ENCODE measurements at regions of chr19 and their contacts with region 1.

Region 1: GRCh38 chr19:10797541-10798256 is 38.3 kb downstream of the TMED1 start:
- DNase-seq: peak; percentile 95
- ATAC-seq: peak; percentile 94
- H3K4me3 Mint-ChIP-seq: peak overlapping the region; percentile 68
- H3K27ac Mint-ChIP-seq: peak overlapping the region; percentile 97
- H3K4me1 Mint-ChIP-seq: peaks cover 36% of the 10 kb centered on the region
- H3K27me3 Mint-ChIP-seq: no peaks in the 10 kb centered on the region

Region 2: GRCh38 chr19:10808937-10809652 is 11.4 kb after region 1 on chr19:
- CTCF ChIA-PET with region 1: interaction called, 6 read pairs
- POLR2A ChIA-PET with region 1: interaction called, 3 read pairs
- intact Hi-C with region 1: loop called in 1 of 2 experiments (anchors 1 kb)
- DNase-seq: peak; percentile 64
- ATAC-seq: peak; percentile 73
- H3K4me3 Mint-ChIP-seq: no peak overlapping the region
- H3K27ac Mint-ChIP-seq: peak overlapping the region; percentile 74
- H3K4me1 Mint-ChIP-seq: peaks cover 29% of the 10 kb centered on the region
- H3K27me3 Mint-ChIP-seq: no peaks in the 10 kb centered on the region

Region 3: DNA sequence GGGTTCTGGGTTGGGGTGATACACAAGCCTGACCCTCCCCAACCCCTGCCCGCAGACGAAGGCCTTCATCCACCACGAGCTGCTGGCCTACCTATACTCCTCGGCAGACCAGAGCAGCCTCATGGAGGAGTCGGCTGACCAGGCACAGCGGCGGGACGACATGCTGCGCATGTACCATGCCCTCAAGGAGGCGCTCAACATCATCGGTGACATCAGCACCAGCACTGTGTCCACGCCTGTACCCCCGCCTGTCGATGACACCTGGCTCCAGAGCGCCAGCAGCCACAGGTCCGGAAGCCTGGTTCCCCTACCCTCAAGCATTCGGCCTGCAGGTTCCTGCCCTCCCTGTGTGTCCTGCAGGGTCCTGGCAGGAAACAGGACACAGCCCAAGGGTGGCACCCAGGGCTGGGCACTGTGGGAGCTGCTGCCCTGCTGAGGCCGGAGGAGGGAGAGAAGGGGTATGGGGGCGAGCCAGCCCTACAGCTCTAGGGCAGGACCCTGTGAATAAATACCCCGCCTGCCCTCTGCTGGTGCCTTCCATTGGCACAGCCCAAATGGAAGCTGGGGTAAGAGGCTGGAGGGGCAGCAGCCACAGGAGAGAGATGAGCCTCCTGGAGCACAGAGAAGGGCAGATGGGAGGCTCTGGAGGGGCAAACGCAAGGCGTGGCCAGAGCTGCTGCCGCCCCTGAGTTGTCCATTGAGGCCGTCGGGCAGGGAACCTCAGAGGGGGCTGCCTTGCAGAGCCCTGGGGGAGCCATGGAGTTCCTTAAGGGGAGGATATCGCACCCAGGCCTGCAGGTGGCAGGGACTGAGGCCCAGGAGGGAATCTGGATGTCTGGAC is 31.5 kb after region 1 on chr19:
- CTCF ChIA-PET with region 1: no interaction called
- POLR2A ChIA-PET with region 1: no interaction called
- intact Hi-C with region 1: loop called in 1 of 2 experiments (anchors 2 kb)
- DNase-seq: peak; percentile 37
- ATAC-seq: peak; percentile 49
- H3K4me3 Mint-ChIP-seq: no peak overlapping the region
- H3K27ac Mint-ChIP-seq: no peak overlapping the region
- H3K4me1 Mint-ChIP-seq: no peaks in the 10 kb centered on the region
- H3K27me3 Mint-ChIP-seq: no peaks in the 10 kb centered on the region